Activated T-helper 1 cell treated with anti-CD3 and anti-CD28 coated beads, Interleukin-12 subunit alpha, Interleukin-12 subunit beta, Interleukin-2, Interleukin-4 antibody, amounts not matched to agents 30 ng/mL and 10 ng/mL and 1 ng/mL, durations not matched to agents 14 hours and 24 hours and 36 hours (primary cell): ENCODE measurements at regions of chr5 and their contacts with region 1.

Region 1: GRCh38 chr5:139262742-139263445 is 30.6 kb upstream of the MATR3 start:
- DNase-seq: peak; percentile 38
- H3K4me3 Mint-ChIP-seq: no peak overlapping the region
- H3K27ac Mint-ChIP-seq: no peak overlapping the region
- H3K4me1 Mint-ChIP-seq: peaks cover 4% of the 10 kb centered on the region
- H3K27me3 Mint-ChIP-seq: peaks cover 28% of the 10 kb centered on the region

Region 2: DNA sequence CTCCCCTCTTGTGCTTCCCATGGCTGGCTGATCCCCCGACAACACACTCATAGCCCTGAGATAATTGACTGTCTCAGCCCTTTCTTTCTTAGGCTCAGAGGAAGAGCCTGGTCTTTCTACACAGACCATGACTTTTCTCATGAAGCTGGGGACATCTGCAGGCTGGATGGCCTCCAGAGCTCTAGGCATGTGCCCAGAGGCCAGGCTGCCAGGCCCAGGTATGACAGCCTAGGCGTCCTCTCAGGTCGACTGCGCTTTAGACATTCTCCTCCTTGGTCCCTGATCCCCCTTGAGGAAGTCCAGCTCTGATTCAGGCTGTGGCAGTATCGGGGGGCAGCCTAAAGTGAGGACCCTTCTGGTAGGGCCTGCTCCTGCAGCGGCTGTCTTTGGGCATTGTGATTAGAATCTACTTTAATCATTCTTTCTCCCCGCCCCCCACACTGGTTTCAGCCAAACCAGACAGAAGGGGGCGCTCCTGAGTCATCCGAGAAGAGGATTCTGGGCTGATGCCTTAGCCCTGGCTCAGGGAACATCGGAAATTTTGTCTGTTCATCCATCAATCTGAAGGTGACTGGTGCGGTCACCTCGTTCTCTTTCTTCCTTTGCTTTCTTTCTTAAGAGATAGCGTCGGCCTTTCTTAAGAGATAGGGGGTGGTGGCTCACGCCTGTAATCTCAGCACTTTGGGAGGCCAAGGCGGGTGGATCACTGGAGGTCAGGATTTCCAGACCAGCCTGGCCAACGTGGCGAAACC is 621.2 kb before region 1 on chr5:
- intact Hi-C with region 1: loop called (anchors 1 kb)
- DNase-seq: peak; percentile 52
- H3K4me3 Mint-ChIP-seq: no peak overlapping the region
- H3K27ac Mint-ChIP-seq: no peak overlapping the region
- H3K4me1 Mint-ChIP-seq: no peaks in the 10 kb centered on the region
- H3K27me3 Mint-ChIP-seq: peaks cover 59% of the 10 kb centered on the region

Region 3: DNA sequence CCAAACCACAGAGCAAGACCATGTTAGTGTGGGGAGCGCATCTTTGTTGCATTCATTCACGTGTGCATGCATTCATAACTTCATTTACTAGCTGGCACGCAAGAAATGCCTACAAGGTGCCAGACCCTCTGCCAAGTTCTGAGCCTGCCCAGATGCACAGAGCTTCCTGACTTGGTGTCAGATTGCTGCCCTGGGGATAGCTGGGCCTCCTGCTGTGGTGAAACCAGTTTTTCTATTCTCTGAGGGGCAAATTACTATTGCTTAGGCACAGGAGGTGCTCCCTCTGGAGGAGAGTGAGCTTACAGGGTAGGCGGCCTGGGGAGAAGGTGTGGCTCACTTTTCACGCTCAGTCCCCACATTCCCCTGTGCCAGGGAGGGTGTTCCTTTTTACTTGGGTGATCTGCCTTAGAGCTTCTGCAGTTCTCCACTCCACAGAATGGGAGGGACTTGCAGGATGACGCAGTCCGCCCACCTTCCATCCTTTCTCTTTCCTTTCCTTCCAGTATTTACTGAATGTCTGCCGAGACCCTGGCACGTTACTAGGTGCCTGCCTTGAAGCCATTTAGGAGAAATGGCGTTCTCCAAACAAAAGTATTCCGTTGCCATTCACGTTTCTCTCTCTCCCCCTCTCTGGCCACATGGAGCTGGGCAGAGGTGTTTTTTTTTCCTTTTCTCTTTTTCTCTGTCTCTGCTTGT is 537.6 kb before region 1 on chr5:
- intact Hi-C with region 1: no loop called
- DNase-seq: no peak
- H3K4me3 Mint-ChIP-seq: no peak overlapping the region
- H3K27ac Mint-ChIP-seq: no peak overlapping the region
- H3K4me1 Mint-ChIP-seq: peaks cover 30% of the 10 kb centered on the region
- H3K27me3 Mint-ChIP-seq: peaks cover 29% of the 10 kb centered on the region

Region 4: DNA sequence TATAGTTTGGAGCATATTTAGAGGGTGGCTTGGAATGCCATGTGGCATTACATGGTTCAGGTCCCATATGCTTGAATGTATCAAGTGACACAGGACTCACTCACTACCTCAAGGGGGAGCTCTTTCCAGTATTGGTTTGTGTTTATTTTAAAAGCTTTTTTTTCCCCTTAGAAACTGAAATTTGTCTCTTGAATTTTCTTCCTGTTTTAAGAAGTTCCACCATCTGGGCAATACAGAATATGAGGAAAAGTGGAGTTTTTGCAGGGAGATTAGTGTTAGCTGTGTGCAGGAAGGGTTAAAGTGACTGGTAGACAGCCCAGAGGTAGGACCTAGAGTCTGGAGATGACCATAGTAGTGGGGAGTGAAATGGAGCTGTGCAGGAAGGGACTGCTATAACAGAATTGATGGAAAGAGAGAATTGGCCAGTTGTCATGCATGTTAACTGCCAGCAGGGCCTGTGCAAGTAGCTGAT is 473.1 kb before region 1 on chr5:
- intact Hi-C with region 1: loop called (anchors 1 kb)
- DNase-seq: no peak
- H3K4me3 Mint-ChIP-seq: no peak overlapping the region
- H3K27ac Mint-ChIP-seq: no peak overlapping the region
- H3K4me1 Mint-ChIP-seq: peaks cover 18% of the 10 kb centered on the region
- H3K27me3 Mint-ChIP-seq: peaks cover 7% of the 10 kb centered on the region

Region 5: DNA sequence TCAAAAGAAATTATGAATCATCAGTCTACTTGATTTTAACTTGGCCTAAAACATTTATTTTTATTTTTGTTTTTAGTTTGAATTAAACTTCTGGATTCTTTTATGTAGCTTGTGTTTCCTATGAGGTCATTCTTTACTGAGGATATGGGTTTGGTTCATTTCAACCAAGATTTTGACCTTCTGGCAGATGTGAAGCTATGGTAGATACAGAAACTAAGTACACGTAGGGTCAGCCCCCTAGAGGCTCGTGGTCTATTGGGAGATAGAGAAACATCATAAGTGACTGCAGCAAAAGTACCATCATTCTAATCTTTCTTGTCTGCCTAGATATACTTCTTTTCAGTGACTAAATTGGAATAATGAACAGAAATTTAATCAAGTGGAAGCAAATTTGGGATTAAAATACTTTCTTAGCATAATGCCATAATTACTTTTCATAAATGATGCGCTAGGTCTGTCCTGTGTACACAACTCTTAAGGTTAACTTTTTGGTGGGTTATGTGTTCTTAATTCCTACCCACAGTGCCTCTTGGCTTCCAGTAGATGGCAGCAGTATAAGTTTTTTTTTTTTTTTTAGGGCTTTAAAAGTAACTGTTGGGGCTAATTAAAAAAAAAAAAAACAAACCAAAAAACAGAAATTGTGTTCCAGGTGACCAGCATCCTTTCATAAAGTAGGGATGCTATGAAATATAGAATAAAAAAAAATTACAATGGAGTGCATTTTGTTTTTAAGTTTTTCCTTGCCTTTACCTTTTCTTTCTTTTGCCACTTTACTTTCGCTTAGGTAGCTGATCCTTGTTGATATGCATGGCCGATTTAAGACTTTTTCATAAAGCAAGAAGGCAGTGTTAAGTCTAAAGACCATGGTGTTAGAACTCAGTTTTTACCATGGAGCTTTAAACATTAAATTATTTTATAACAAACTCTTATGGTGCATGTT is 437.7 kb before region 1 on chr5:
- intact Hi-C with region 1: loop called (anchors 1 kb)
- DNase-seq: no peak
- H3K4me3 Mint-ChIP-seq: no peak overlapping the region
- H3K27ac Mint-ChIP-seq: no peak overlapping the region
- H3K4me1 Mint-ChIP-seq: no peaks in the 10 kb centered on the region
- H3K27me3 Mint-ChIP-seq: no peaks in the 10 kb centered on the region